ENCODE measurements at regions of chr11 and their contacts with region 1.

Region 1: GRCh38 chr11:75802913-75803820 is 11.8 kb upstream of the UVRAG start:
- DNase-seq: peak; percentile 39 to 67 (median 54)
- ATAC-seq: peak; percentile 91
- H3K4me3 ChIP-seq: no peak overlapping the region
- H3K4me3 Mint-ChIP-seq: no peak overlapping the region
- H3K27ac ChIP-seq: no peak overlapping the region
- H3K27ac Mint-ChIP-seq: no peak overlapping the region
- H3K4me1 ChIP-seq: peaks cover 0 to 14% of the 10 kb centered on the region in 2 donors
- H3K4me1 Mint-ChIP-seq: peaks cover 0 to 22% (median 11%) of the 10 kb centered on the region in 7 donors
- H3K27me3 ChIP-seq: no peaks in the 10 kb centered on the region
- H3K27me3 Mint-ChIP-seq: no peaks in the 10 kb centered on the region

Region 2: DNA sequence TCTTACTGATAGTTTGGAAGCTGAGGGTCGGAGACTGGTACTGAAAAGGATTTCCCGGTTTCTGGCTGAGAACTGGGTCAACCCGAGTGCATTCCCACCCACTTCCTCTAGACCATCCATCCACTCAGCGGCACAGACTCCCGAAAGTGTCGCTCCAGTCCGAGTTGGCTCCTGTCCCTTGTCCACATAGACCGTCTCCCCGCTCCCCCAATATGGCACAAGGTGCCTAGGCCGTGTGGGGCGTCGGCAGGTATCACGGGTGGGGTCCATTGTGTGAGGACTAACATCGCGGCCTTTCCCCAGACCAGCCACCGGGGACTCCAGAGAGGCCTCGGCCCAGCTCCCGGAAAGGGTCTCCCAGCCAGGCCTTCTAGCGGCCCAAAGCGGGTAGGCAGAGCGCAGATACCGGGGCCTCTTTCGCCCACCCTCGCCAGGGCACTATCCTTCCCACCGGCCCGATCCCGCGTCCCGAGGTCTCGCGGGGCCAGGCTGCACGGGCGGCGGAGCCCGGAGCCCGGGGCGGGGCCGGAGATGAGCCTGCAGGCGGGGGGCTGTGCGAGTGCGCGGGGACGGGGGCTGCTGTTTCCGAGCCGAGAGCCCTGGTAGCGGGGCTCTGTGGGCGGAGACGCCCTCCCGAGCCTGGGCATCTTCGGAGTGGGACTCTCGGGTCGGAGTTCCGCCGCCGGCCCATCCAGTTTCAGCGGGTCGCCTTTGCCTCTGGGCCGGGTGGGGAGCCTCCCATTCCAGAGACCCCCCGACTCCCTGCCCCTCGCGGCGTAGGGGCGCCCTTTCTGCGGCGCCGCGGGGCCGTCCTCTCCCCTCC is 220.1 kb before region 1 on chr11:
- CTCF ChIA-PET with region 1: no interaction called
- POLR2A ChIA-PET with region 1: no interaction called
- intact Hi-C with region 1: no loop called
- DNase-seq: peak; percentile 10 to 60 (median 40)
- ATAC-seq: peak; percentile 87
- H3K4me3 ChIP-seq: peak overlapping the region; percentile 72
- H3K4me3 Mint-ChIP-seq: peak overlapping the region; percentile 42 to 95 (median 82)
- H3K27ac ChIP-seq: peak overlapping the region; percentile 59
- H3K27ac Mint-ChIP-seq: peak overlapping the region in 6 of 9 donors; percentile 77 to 92 (median 86)
- H3K4me1 ChIP-seq: peaks cover 9 to 10% of the 10 kb centered on the region in 2 donors
- H3K4me1 Mint-ChIP-seq: peaks cover 10 to 24% (median 16%) of the 10 kb centered on the region in 7 donors
- H3K27me3 ChIP-seq: no peaks in the 10 kb centered on the region
- H3K27me3 Mint-ChIP-seq: peaks cover 0 to 45% (median 21%) of the 10 kb centered on the region in 5 donors

Region 3: DNA sequence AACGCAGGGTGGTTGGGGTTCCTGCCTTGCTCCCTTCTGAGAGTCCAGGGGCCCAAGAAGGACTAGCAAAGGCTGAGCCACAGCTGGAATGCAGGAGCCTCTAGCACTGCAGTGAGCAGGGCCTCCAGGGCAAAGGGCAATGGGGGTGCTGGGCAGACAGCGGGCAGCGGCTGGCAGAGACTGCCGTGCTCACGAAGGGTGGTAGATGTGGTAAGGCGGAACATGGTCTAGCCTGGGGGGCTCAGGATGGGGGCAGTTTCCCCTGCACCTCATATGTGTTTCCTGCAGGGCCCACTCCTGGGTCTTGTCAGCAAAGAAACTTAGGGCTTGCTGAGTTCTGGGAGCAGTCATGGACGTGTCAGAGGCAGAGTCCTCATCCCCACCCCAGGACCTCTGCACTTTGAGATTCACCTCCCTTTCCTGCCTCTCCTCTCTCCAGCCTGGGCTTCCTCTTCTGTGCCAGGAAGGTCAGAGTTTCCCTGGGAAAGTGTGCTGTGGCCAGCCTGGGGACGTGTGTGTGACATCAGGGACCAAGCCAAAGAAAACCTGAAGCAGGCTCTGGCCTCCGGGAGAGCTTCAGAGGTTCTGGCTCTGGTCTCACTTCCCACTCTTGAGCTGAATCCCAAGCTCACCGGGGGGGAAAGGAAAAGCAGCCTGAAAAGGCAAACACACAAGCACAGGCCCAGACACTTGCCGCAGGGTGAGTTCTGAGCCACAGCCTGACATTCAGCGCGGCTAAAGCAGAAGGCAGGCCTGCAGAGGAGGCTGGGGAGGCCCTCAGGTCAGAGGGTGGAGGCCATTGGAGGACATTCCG is 81.1 kb before region 1 on chr11:
- CTCF ChIA-PET with region 1: no interaction called
- POLR2A ChIA-PET with region 1: no interaction called
- intact Hi-C with region 1: loop called in 1 of 2 experiments (anchors 1 kb)
- DNase-seq: no peak
- ATAC-seq: no peak
- H3K4me3 ChIP-seq: no peak overlapping the region
- H3K4me3 Mint-ChIP-seq: no peak overlapping the region
- H3K27ac ChIP-seq: no peak overlapping the region
- H3K27ac Mint-ChIP-seq: no peak overlapping the region
- H3K4me1 ChIP-seq: no peaks in the 10 kb centered on the region
- H3K4me1 Mint-ChIP-seq: peaks cover 0 to 5% (median 0%) of the 10 kb centered on the region in 7 donors
- H3K27me3 ChIP-seq: no peaks in the 10 kb centered on the region
- H3K27me3 Mint-ChIP-seq: peaks cover 0 to 1% (median 0%) of the 10 kb centered on the region in 5 donors

Region 4: DNA sequence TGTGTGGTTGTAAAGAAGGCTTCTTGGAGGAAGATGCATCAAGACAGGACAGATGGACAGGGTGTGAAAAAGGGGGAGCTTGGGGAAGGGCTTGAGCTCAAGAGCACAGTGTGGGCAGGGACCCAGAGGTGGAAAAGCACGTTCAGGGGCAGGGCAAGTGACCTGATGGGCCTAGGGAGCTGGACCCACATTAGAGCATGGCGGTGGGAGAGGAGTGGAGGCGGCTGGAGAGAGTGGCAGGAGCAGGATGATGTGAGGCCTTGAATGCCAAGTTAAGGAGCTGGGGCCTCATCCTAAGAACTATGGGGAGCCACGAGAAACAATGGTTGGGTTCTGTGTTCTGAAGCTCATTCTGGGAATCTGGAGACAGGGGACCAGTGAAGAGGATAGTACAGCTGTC is 44.0 kb before region 1 on chr11:
- CTCF ChIA-PET with region 1: no interaction called
- POLR2A ChIA-PET with region 1: no interaction called
- intact Hi-C with region 1: no loop called
- DNase-seq: no peak
- ATAC-seq: no peak
- H3K4me3 ChIP-seq: no peak overlapping the region
- H3K4me3 Mint-ChIP-seq: no peak overlapping the region
- H3K27ac ChIP-seq: no peak overlapping the region
- H3K27ac Mint-ChIP-seq: no peak overlapping the region
- H3K4me1 ChIP-seq: no peaks in the 10 kb centered on the region
- H3K4me1 Mint-ChIP-seq: peaks cover 0 to 2% (median 0%) of the 10 kb centered on the region in 7 donors
- H3K27me3 ChIP-seq: no peaks in the 10 kb centered on the region
- H3K27me3 Mint-ChIP-seq: peaks cover 0 to 16% (median 0%) of the 10 kb centered on the region in 5 donors

Region 5: GRCh38 chr11:76083563-76084451 is 280.6 kb after region 1 on chr11:
- CTCF ChIA-PET with region 1: no interaction called
- POLR2A ChIA-PET with region 1: no interaction called
- intact Hi-C with region 1: no loop called
- DNase-seq: no peak
- ATAC-seq: no peak
- H3K4me3 ChIP-seq: no peak overlapping the region
- H3K4me3 Mint-ChIP-seq: no peak overlapping the region
- H3K27ac ChIP-seq: no peak overlapping the region
- H3K27ac Mint-ChIP-seq: no peak overlapping the region
- H3K4me1 ChIP-seq: no peaks in the 10 kb centered on the region
- H3K4me1 Mint-ChIP-seq: peaks cover 0 to 5% (median 0%) of the 10 kb centered on the region in 7 donors
- H3K27me3 ChIP-seq: no peaks in the 10 kb centered on the region
- H3K27me3 Mint-ChIP-seq: no peaks in the 10 kb centered on the region